Activated B cell treated with CpG ODN at 0.5 μM for 24 hours (primary cell): ENCODE measurements at regions of chr20 and their contacts with region 1.

Region 1: GRCh38 chr20:57391074-57391554 is at the start of gene RBM38:
- DNase-seq: peak; percentile 77
- ATAC-seq: peak; percentile 69
- H3K4me3 Mint-ChIP-seq: peak within 1 kb of the TSS; percentile 92
- H3K27ac Mint-ChIP-seq: peak within 1 kb of the TSS; percentile 96
- H3K4me1 Mint-ChIP-seq: peaks cover 63% of the 10 kb centered on the region
- H3K27me3 Mint-ChIP-seq: no peaks in the 10 kb centered on the region
- CTCF ChIP-seq: no peak
- total RNA-seq, gene RBM38: 69.6 and 70.7 TPM in 2 replicates

Region 2: DNA sequence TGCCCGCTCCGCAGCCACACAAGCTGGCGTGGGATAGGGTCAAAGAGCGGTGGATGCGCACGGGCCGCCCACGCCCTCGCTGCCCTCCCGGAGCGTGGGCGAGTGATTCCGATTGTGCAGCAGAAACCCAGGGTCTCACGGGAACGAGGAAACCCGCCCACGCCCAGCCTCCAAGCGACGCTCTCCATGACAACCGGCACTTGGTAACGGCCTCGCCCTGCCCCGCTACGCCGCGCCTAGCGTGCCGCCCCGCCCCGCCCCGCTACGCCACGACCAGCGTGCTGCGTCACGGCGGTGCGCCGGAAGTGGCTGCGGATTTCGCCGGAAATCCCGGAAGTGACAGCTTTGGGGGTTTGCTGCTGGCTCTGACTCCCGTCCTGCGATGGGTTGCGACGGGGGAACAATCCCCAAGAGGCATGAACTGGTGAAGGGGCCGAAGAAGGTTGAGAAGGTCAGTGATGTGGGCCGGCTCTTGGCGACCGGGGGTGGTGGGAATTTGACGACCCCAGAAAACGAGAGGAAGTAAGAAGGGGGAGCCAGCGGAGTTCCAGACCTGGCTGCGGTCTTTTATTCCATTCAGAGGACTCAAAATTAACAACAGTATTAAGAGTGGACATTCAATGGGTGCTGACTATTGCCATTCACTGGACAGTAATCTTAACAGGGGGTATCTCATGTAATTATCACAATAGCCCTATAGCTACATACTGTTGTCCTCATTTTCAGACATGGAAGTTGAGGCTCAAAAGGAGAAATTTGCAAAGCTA is 922.6 kb before region 1 on chr20 and contains the start of gene RTF2:
- CTCF ChIA-PET with region 1: no interaction called
- POLR2A ChIA-PET with region 1: no interaction called
- intact Hi-C with region 1: loop called (anchors 5 kb)
- DNase-seq: peak; percentile 99
- ATAC-seq: peak; percentile 93
- H3K4me3 Mint-ChIP-seq: peak within 1 kb of the TSS; percentile 100
- H3K27ac Mint-ChIP-seq: peak within 1 kb of the TSS; percentile 99
- H3K4me1 Mint-ChIP-seq: peaks cover 44% of the 10 kb centered on the region
- H3K27me3 Mint-ChIP-seq: no peaks in the 10 kb centered on the region
- CTCF ChIP-seq: no peak
- total RNA-seq, gene RTF2: 81.0 and 81.1 TPM in 2 replicates

Region 3: GRCh38 chr20:57450419-57450818 is 59.3 kb after region 1 on chr20:
- CTCF ChIA-PET with region 1: no interaction called
- POLR2A ChIA-PET with region 1: interaction called, 14 read pairs
- intact Hi-C with region 1: no loop called
- DNase-seq: peak; percentile 32
- ATAC-seq: peak; percentile 78
- H3K4me3 Mint-ChIP-seq: peak overlapping the region; percentile 69
- H3K27ac Mint-ChIP-seq: peak overlapping the region; percentile 63
- H3K4me1 Mint-ChIP-seq: peaks cover 65% of the 10 kb centered on the region
- H3K27me3 Mint-ChIP-seq: no peaks in the 10 kb centered on the region
- CTCF ChIP-seq: no peak

Region 4: GRCh38 chr20:57493091-57493615 is 102.0 kb after region 1 on chr20:
- CTCF ChIA-PET with region 1: interaction called, 19 read pairs
- POLR2A ChIA-PET with region 1: interaction called, 21 read pairs
- intact Hi-C with region 1: no loop called
- DNase-seq: no peak
- ATAC-seq: no peak
- H3K4me3 Mint-ChIP-seq: no peak overlapping the region
- H3K27ac Mint-ChIP-seq: no peak overlapping the region
- H3K4me1 Mint-ChIP-seq: peaks cover 35% of the 10 kb centered on the region
- H3K27me3 Mint-ChIP-seq: no peaks in the 10 kb centered on the region
- CTCF ChIP-seq: no peak

Region 5: DNA sequence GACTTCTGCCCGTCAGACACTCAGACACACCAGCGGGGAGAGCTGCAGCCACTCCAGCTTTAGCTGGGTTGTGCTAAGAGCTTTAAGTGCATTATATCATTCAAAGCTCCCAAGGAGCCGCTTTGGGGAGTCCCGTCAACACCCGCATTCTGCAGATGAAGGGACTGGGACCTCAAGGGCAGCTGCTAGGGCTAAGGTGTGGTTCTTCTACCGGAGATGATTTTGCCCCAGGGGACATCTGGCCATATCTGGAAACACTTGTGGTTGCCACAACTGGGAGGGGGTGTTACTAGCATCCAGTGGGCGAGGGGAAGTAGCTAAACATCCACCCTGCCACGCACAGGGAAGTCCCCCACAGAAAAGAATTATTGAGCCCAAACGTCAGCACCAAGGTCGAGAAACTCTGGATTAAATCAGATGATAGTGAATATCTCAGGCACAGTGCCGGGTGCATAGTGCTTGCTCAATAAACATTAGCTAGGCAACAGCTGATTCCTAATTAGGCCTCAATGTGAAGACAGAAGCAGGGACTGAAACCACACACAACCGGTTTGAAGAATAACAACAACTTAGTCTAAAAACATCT is 289.1 kb after region 1 on chr20:
- CTCF ChIA-PET with region 1: no interaction called
- POLR2A ChIA-PET with region 1: interaction called, 6 read pairs
- intact Hi-C with region 1: loop called (anchors 2 kb)
- DNase-seq: peak; percentile 64
- ATAC-seq: peak; percentile 72
- H3K4me3 Mint-ChIP-seq: peak overlapping the region; percentile 80
- H3K27ac Mint-ChIP-seq: peak overlapping the region; percentile 94
- H3K4me1 Mint-ChIP-seq: peaks cover 100% of the 10 kb centered on the region
- H3K27me3 Mint-ChIP-seq: no peaks in the 10 kb centered on the region
- CTCF ChIP-seq: no peak

Region 6: DNA sequence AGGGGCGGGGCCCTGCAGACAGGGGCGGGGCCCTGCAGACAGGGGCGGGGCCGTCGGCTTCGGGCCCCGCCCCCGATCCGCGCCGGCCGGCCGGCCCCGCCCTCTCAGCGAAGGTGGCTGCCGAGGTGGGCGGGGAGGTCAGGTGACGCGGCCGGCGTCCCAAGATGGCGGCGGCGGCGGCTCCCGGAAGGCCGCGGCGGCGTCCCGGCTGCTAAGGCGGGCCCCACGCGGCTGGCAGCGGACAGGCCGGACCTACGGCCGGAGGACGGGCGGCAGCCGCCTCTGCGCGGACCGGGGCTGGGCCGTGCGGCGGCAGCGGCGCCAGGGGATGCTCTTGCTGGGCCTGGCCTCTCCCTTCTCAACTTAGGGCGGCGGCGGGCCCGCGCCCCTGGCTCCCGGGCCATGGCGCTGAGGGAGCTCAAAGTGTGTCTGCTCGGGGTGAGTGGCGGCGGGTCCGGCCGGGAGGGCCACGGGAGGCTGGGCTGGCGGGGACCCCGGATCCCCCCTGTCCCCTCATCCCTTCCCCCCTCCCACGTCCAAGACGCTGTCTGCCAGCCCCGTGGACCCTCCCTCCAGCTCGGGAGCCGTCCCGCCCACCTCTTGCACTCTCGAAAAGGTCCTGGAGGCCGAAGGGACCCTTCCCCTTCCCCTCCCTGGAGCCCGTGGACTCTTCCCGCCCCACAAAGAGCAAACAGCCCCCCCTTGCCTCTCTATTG is 918.6 kb after region 1 on chr20 and contains the start of gene RAB22A:
- CTCF ChIA-PET with region 1: no interaction called
- POLR2A ChIA-PET with region 1: interaction called, 7 read pairs
- intact Hi-C with region 1: loop called (anchors 2 kb)
- DNase-seq: peak; percentile 85
- ATAC-seq: peak; percentile 61
- H3K4me3 Mint-ChIP-seq: peak within 1 kb of the TSS; percentile 94
- H3K27ac Mint-ChIP-seq: peak within 1 kb of the TSS; percentile 94
- H3K4me1 Mint-ChIP-seq: peaks cover 58% of the 10 kb centered on the region
- H3K27me3 Mint-ChIP-seq: no peaks in the 10 kb centered on the region
- CTCF ChIP-seq: no peak
- total RNA-seq, gene RAB22A: 14.4 and 15.7 TPM in 2 replicates

Region 7: DNA sequence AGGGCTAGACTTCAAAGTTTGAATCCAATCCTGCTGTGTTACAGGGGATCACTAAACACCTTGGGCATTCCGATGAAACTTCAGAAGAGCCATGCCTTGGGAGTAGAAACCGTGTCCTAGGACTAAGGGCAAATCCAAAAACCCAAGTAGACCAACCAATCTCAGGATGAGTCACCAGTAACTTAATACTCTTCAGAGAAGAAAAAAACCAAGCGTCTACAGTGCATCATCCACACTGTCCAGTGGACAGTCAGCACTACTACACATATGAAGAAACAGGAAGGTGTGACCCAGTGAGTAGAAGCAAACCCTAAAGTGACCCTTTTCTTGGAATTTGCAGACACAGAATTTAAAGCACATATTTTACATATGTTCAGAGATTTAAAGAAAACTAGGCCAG is 958.5 kb after region 1 on chr20:
- CTCF ChIA-PET with region 1: no interaction called
- POLR2A ChIA-PET with region 1: no interaction called
- intact Hi-C with region 1: no loop called
- DNase-seq: no peak
- ATAC-seq: no peak
- H3K4me3 Mint-ChIP-seq: no peak overlapping the region
- H3K27ac Mint-ChIP-seq: no peak overlapping the region
- H3K4me1 Mint-ChIP-seq: no peaks in the 10 kb centered on the region
- H3K27me3 Mint-ChIP-seq: no peaks in the 10 kb centered on the region
- CTCF ChIP-seq: no peak

Region 8: GRCh38 chr20:59120491-59120890 is 1729.4 kb after region 1 on chr20:
- CTCF ChIA-PET with region 1: no interaction called
- POLR2A ChIA-PET with region 1: no interaction called
- intact Hi-C with region 1: loop called (anchors 10 kb)
- DNase-seq: no peak
- ATAC-seq: no peak
- H3K4me3 Mint-ChIP-seq: peak overlapping the region; percentile 54
- H3K27ac Mint-ChIP-seq: peak overlapping the region; percentile 99
- H3K4me1 Mint-ChIP-seq: peaks cover 68% of the 10 kb centered on the region
- H3K27me3 Mint-ChIP-seq: no peaks in the 10 kb centered on the region
- CTCF ChIP-seq: no peak